ENCODE measurements at regions of chr14 and their contacts with region 1.

Region 1: DNA sequence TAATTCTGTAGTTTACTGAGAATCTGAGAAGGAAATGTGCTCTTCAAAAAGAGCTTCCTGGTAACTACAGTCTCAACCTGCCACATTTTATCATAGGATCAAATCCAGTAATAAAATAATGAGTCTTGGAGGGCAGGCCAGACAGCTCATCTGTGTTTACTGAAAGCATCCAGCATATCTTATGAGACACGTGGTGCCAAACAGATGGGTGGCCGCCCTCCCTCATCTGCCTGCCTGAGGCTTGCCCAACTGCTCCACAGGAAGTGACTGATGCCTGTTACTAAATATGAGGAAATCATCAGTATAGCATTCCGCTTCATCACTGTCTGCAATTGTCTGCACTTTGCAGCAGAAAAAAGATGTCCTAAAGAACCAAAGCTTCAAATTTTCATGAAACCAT is 13.5 kb downstream of the DHRS7 start:
- DNase-seq: peak in 2 of 6 donors; percentile 20 to 50
- ATAC-seq: peak in 3 of 4 donors; percentile 77 to 89 (median 81)
- H3K4me3 ChIP-seq: no peak overlapping the region
- H3K27ac ChIP-seq: peak overlapping the region in 1 of 4 donors; percentile 1
- H3K4me1 ChIP-seq: peaks cover 4 to 5% (median 4%) of the 10 kb centered on the region in 3 donors
- H3K27me3 ChIP-seq: no peaks in the 10 kb centered on the region
- CTCF ChIP-seq: no peak

Region 2: GRCh38 chr14:60091550-60092530 is 59.9 kb before region 1 on chr14 and contains the start of gene PCNX4:
- intact Hi-C with region 1: loop called in 1 of 3 experiments (anchors 10 kb)
- DNase-seq: peak; percentile 93 to 97 (median 96)
- ATAC-seq: peak; percentile 94 to 98 (median 96)
- H3K4me3 ChIP-seq: peak within 1 kb of the TSS; percentile 55 to 67 (median 64)
- H3K27ac ChIP-seq: peak within 1 kb of the TSS; percentile 93 to 99 (median 98)
- H3K4me1 ChIP-seq: peaks cover 0 to 11% (median 7%) of the 10 kb centered on the region in 3 donors
- H3K27me3 ChIP-seq: no peaks in the 10 kb centered on the region
- CTCF ChIP-seq: no peak
- total RNA-seq, gene PCNX4: 13.7 to 24.0 (median 16.1) TPM

Region 3: GRCh38 chr14:60106339-60106738 is 45.4 kb before region 1 on chr14:
- intact Hi-C with region 1: loop called in 1 of 3 experiments (anchors 10 kb)
- DNase-seq: no peak
- ATAC-seq: peak in 2 of 4 donors; percentile 67 to 75
- H3K4me3 ChIP-seq: no peak overlapping the region
- H3K27ac ChIP-seq: no peak overlapping the region
- H3K4me1 ChIP-seq: peaks cover 6 to 14% (median 8%) of the 10 kb centered on the region in 3 donors
- H3K27me3 ChIP-seq: no peaks in the 10 kb centered on the region
- CTCF ChIP-seq: no peak

Measured in pancreas (tissue), 10 donors.